PC-3 (cell line): ENCODE measurements at regions of chr9 and their contacts with region 1.

Region 1: DNA sequence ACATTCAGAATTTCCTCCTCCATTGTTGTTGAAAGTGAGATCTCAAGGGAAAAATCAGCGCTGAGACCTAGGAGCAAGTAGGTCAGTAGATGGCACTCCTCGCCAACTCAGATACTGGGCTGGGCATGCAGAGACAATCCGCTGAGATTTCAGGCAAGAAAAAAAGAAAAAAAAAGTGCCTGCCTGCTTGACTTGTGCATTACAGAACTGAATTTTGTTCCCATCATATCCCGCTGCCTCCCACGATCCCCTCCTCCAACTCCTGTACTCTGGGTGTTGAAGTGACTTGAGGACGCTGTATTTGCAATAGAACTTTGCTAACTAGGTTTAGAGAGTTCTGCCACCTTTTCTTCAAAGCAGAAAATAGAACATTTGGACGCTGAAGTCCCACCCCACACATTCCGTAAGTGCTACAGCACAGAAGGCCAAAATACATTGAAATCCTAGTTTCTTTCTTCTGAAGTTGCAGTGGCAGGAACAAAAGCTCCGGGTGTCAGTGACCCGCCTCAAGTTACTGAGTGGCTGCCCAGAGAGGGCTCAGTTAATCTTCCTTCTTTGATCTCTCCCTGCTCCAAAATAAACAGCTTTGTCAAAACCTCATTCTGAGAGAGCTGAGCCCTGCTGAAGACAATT is 265.8 kb downstream of the MLLT3 start:
- DNase-seq: peak; percentile 75
- ATAC-seq: peak; percentile 89
- H3K4me3 ChIP-seq: peak overlapping the region; percentile 43; the same call in 1 of the 2 replicates
- H3K27ac ChIP-seq: no peak overlapping the region
- H3K4me1 ChIP-seq: peaks cover 21% of the 10 kb centered on the region
- H3K27me3 ChIP-seq: no peaks in the 10 kb centered on the region
- CTCF ChIP-seq: peak; percentile 82

Region 2: GRCh38 chr9:19925817-19926503 is 430.6 kb before region 1 on chr9:
- CTCF ChIA-PET with region 1: no interaction called
- POLR2A ChIA-PET with region 1: no interaction called
- intact Hi-C with region 1: loop called (anchors 1 kb)
- DNase-seq: peak; percentile 83
- ATAC-seq: peak; percentile 89
- H3K4me3 ChIP-seq: peak overlapping the region; percentile 44; the same call in 1 of the 2 replicates
- H3K27ac ChIP-seq: no peak overlapping the region
- H3K4me1 ChIP-seq: no peaks in the 10 kb centered on the region
- H3K27me3 ChIP-seq: no peaks in the 10 kb centered on the region
- CTCF ChIP-seq: peak; percentile 86

Region 3: DNA sequence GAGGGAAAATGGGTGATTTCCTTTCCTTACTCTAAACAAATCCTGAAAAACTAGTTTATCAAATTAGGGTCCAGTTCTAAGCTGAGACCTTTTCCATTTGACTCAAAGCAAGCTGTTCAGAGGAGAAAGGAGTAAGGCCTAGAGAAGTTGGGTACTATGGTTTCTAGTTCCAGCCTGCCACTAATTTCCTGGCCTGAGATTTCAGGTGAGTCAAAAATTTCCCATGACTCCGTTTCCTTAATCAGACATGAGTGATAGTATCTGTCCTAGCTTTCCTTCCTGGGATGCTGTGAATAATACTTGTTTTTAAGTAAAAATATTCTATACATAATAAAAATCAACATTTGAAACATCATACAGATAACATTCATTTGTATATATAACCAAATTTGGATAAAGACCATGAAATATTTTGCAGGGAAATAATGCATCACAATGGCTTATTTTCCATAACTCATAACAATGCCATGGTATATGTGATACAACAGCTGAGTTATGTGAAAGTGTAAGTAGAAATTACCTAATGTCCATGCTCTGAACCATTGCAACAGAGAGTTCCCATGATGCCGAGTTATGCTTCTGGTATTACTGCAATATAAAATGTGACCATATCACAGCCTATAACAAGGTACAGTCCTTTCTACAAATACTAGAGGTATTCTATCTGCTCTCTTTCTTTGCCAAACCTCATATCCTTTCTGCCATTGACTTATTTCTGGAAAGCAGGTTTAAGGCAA is 123.1 kb after region 1 on chr9:
- CTCF ChIA-PET with region 1: no interaction called
- POLR2A ChIA-PET with region 1: no interaction called
- intact Hi-C with region 1: loop called (anchors 2 kb)
- DNase-seq: no peak
- ATAC-seq: no peak
- H3K4me3 ChIP-seq: no peak overlapping the region
- H3K27ac ChIP-seq: no peak overlapping the region
- H3K4me1 ChIP-seq: no peaks in the 10 kb centered on the region
- H3K27me3 ChIP-seq: no peaks in the 10 kb centered on the region
- CTCF ChIP-seq: no peak

Region 4: DNA sequence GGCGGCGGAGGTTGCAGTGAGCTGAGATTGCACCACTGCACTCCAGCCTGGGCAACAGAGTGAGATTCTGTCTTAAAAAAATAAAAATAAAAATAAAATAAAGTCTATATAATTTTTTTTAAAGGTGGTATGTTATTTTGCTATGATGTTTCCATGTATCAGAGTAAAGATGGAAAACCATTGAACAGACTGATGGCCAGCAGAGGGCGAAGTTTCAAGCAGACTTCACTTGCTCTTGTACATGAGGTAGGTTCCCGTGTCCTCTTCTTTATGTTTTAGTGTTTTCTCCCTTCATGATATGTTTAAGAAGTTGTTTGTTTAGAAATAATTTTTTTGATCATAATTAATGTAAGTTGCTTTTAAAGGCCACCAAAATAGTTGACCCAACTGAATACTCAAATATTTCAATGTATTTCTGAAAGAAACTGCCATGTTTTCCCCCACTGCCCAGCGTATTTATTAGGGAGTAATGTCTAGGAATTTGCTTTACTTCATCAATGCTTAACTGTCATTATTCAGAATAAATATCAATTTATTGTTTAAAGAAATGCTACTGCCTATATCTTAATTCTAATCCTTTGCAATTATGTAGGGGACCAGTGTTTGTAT is 528.6 kb after region 1 on chr9:
- CTCF ChIA-PET with region 1: no interaction called
- POLR2A ChIA-PET with region 1: no interaction called
- intact Hi-C with region 1: loop called (anchors 10 kb)
- DNase-seq: peak; percentile 54
- ATAC-seq: peak; percentile 64
- H3K4me3 ChIP-seq: no peak overlapping the region
- H3K27ac ChIP-seq: no peak overlapping the region
- H3K4me1 ChIP-seq: no peaks in the 10 kb centered on the region
- H3K27me3 ChIP-seq: no peaks in the 10 kb centered on the region
- CTCF ChIP-seq: peak; percentile 57

Region 5: DNA sequence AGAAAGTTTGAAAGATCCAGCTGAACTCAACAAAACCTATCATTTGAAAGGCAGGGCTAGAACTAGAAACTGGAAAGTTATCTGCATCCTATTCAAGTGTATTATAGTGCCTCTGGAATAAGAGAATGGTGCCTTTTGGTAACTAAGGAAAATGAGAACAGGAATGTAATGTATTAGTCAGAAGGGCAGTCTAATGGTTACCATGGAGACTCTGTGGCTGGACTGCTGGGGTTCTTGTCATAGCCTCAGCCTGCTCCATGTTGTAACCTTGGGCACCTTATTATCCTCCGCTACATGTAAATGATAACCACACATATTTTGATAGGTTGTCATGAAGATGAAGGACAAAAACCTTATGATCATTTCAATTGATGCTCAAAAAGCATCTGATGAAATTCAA is 745.8 kb after region 1 on chr9:
- CTCF ChIA-PET with region 1: no interaction called
- POLR2A ChIA-PET with region 1: no interaction called
- intact Hi-C with region 1: loop called (anchors 10 kb)
- DNase-seq: no peak
- ATAC-seq: no peak
- H3K4me3 ChIP-seq: no peak overlapping the region
- H3K27ac ChIP-seq: no peak overlapping the region
- H3K4me1 ChIP-seq: no peaks in the 10 kb centered on the region
- H3K27me3 ChIP-seq: no peaks in the 10 kb centered on the region
- CTCF ChIP-seq: no peak